A549 (cell line): ENCODE measurements at regions of chr14 and their contacts with region 1.

Region 1: GRCh38 chr14:31449971-31450610 is 7.2 kb downstream of the DTD2 start:
- DNase-seq: peak; percentile 33 to 56
- ATAC-seq: peak; percentile 78 to 83
- H3K4me3 ChIP-seq: no peak overlapping the region
- H3K27ac ChIP-seq: peak overlapping the region in 1 of 2 experiments; percentile 5; a peak in 1 of 6 replicates
- H3K4me1 ChIP-seq: peaks cover 30% of the 10 kb centered on the region
- CTCF ChIP-seq: peak; percentile 61
- EP300 ChIP-seq: no peak
- POLR2A ChIP-seq: no peak
- RAD21 ChIP-seq: peak; percentile 66 to 73

Region 2: GRCh38 chr14:30874120-30874998 is 575.7 kb before region 1 on chr14 and contains the start of gene COCH:
- CTCF ChIA-PET with region 1: no interaction called
- POLR2A ChIA-PET with region 1: no interaction called
- DNase-seq: peak; percentile 63 to 74
- ATAC-seq: peak; percentile 88 to 94
- H3K4me3 ChIP-seq: peak within 1 kb of the TSS; percentile 86
- H3K27ac ChIP-seq: peak within 1 kb of the TSS; percentile 75 to 90
- H3K4me1 ChIP-seq: 0 out of 3 replicates have a peak, but pooled peaks cover 4% of the 10 kb centered on the region
- CTCF ChIP-seq: peak; percentile 43; the same call in 2 of the 3 replicates
- EP300 ChIP-seq: no peak
- POLR2A ChIP-seq: peak; percentile 66
- RAD21 ChIP-seq: peak in 1 of 2 experiments; percentile 42; a peak in 3 of 5 replicates
- polyA plus RNA-seq, gene COCH: 45.9 and 53.1 TPM in 2 replicates

Region 3: GRCh38 chr14:31426663-31427062 is 23.4 kb before region 1 on chr14:
- CTCF ChIA-PET with region 1: interaction called, 14 read pairs
- POLR2A ChIA-PET with region 1: no interaction called
- DNase-seq: no peak
- ATAC-seq: no peak
- H3K4me3 ChIP-seq: no peak overlapping the region
- H3K27ac ChIP-seq: no peak overlapping the region
- H3K4me1 ChIP-seq: no peaks in the 10 kb centered on the region
- CTCF ChIP-seq: no peak
- EP300 ChIP-seq: no peak
- POLR2A ChIP-seq: no peak
- RAD21 ChIP-seq: no peak

Region 4: DNA sequence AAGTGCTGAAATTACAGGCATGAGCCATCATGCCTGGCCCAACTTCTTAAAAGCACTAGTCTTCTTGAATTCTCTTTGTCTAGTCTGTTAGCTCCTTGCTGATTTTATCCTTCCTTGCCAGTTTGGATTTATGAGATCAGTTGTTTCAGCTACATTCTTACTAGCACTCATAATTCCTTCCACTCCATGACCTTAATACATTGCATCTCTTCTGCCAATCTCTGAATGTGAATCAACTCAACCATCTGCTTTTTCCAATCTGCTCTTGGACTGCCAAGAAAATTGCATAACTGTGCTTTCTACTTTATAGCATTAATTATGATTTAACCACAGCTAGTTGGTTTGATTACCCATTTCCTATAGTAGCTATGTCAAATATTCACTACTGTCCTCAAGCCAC is 14.8 kb before region 1 on chr14:
- CTCF ChIA-PET with region 1: interaction called, 12 read pairs
- POLR2A ChIA-PET with region 1: no interaction called
- DNase-seq: no peak
- ATAC-seq: no peak
- H3K4me3 ChIP-seq: no peak overlapping the region
- H3K27ac ChIP-seq: no peak overlapping the region
- H3K4me1 ChIP-seq: peaks cover 6% of the 10 kb centered on the region; the same call in 2 of the 3 replicates
- CTCF ChIP-seq: no peak
- EP300 ChIP-seq: no peak
- POLR2A ChIP-seq: no peak
- RAD21 ChIP-seq: no peak

Region 5: DNA sequence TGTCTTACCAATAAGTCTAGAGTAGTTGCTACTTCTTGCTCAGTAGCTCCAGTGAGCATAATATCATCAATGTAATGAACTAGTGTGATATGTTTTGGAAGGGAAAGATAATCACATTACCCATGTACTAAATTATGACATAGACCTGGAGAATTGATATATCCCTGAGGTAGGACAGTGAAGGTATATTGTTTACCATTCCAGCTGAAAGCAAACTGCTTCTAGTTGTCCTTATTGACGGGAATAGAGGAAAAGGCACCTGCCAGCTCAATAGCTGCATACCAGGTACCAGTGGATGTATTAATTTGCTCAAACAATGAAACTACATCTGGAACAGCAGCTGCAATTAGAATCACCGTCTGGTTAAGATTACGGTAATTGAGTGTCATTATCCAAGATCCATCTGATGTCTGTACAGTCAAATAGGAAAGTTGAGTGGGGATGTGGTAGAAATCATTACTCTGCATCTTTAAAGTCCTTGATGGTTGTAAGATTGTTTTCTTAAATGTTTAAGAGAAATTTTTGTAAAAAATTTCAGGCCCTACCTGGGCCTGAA is 527.0 kb after region 1 on chr14:
- CTCF ChIA-PET with region 1: no interaction called
- POLR2A ChIA-PET with region 1: no interaction called
- DNase-seq: no peak
- ATAC-seq: no peak
- H3K4me3 ChIP-seq: no peak overlapping the region
- H3K27ac ChIP-seq: no peak overlapping the region
- H3K4me1 ChIP-seq: no peaks in the 10 kb centered on the region
- CTCF ChIP-seq: no peak
- EP300 ChIP-seq: no peak
- POLR2A ChIP-seq: no peak
- RAD21 ChIP-seq: no peak